Transverse colon (tissue), 4 donors: ENCODE measurements at regions of chr13 and their contacts with region 1.

Region 1: DNA sequence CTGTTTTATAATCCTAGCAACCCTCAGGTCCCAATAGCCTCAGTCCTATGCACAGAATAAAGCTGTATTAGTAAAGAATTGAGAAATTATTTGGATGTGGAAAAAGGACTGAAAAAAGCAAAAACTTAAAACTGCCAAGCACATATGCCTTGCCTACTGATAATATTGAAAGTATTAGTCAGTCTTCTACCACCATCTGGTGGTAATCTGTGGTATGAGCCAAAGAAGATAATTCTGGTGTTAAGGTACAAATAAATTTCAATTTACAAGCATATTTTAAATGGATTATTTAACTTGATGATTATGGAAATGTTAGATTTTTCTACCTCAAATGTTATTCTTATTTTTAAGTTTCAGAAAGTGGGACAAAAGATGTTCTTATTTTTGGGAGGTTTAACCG is 460.3 kb upstream of the KLHL1 start:
- DNase-seq: no peak
- H3K4me3 ChIP-seq: no peak overlapping the region
- H3K27ac ChIP-seq: no peak overlapping the region
- H3K4me1 ChIP-seq: no peaks in the 10 kb centered on the region
- H3K27me3 ChIP-seq: no peaks in the 10 kb centered on the region
- CTCF ChIP-seq: peak; percentile 50 to 71 (median 65)
- EP300 ChIP-seq: no peak
- POLR2A ChIP-seq: no peak

Region 2: DNA sequence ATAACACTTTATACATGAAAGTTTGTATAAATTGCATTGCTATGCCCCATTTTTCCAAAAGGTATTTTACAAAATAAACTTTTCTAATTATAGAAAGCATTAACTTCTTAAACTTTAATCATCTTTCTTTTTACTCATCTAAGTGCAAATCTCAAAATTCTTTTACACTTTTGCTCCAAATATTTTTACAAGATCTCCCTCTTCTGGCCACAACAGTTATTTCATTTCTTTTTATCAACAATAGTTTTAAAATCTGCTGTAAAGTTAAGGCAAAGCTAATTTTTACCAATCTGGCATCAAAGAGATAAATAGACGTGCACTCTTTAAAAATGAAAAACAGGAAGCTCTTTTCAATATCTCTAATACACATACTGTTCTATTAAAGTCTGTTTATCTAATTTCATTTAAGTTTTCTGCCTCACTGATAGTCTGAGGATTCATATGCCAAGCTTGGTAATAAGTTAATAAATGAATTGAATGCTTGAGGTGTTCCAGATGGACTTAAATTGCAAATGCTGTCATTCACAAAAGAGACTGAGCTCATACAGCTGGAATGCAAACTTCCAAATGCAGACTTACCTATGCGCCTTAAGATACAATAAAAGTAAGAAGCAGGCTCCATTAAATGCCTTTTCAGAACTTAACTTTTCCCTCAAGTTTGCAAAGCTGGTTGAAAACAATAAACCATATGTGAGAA is 1044.0 kb before region 1 on chr13:
- in situ Hi-C with region 1: loop called in 3 of 4 experiments (anchors 25 kb)
- intact Hi-C with region 1: no loop called
- DNase-seq: no peak
- H3K4me3 ChIP-seq: no peak overlapping the region
- H3K27ac ChIP-seq: no peak overlapping the region
- H3K4me1 ChIP-seq: no peaks in the 10 kb centered on the region
- H3K27me3 ChIP-seq: no peaks in the 10 kb centered on the region
- CTCF ChIP-seq: peak in 1 of 5 experiments; percentile 5
- EP300 ChIP-seq: no peak
- POLR2A ChIP-seq: no peak

Region 3: GRCh38 chr13:70339738-70340137 is 228.8 kb before region 1 on chr13:
- in situ Hi-C with region 1: loop called in 2 of 4 experiments (anchors 25 kb)
- intact Hi-C with region 1: no loop called
- DNase-seq: no peak
- H3K4me3 ChIP-seq: no peak overlapping the region
- H3K27ac ChIP-seq: no peak overlapping the region
- H3K4me1 ChIP-seq: no peaks in the 10 kb centered on the region
- H3K27me3 ChIP-seq: no peaks in the 10 kb centered on the region
- CTCF ChIP-seq: peak; percentile 32 to 56 (median 47)
- EP300 ChIP-seq: no peak
- POLR2A ChIP-seq: no peak

Region 4: DNA sequence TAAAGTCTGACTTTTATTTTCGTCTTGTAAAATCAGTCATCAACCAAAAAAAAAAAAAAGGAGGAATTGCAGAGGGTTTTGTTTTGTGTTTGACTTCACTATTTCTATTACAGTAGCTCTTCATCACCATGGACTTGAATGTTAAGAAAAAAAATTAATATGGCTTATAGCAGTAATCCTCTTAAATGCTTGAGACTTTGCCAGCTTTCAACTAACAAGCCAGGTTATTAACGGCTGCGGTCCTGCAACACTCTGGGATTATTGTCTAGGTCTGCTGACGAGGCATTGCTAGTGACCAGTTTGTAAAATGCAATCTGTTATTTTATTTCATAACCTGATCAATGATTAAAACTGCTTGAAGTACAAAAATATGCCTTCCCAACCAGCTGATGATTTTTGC is 186.9 kb after region 1 on chr13:
- in situ Hi-C with region 1: no loop called
- intact Hi-C with region 1: no loop called
- DNase-seq: no peak
- H3K4me3 ChIP-seq: no peak overlapping the region
- H3K27ac ChIP-seq: no peak overlapping the region
- H3K4me1 ChIP-seq: no peaks in the 10 kb centered on the region
- H3K27me3 ChIP-seq: no peaks in the 10 kb centered on the region
- CTCF ChIP-seq: no peak
- EP300 ChIP-seq: no peak
- POLR2A ChIP-seq: no peak

Region 5: DNA sequence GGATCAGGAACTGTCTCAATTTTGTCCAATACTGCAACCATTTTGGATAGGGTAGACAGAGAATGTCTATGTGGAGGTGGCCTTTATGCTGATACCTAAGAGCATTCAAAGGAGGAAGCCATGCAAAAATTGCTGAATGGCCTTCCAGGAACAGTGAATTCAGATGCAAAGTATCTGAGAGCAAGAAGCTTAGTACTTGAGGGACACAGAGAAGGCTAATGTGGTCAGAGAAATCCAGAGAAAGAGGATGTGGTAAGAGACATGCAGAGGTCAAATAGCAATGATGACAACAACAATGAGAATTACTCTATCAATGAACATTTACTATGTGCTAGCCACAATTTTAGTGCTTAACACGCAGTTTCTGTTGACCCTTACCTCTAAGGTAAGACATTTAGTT is 325.3 kb after region 1 on chr13:
- in situ Hi-C with region 1: no loop called
- intact Hi-C with region 1: no loop called
- DNase-seq: no peak
- H3K4me3 ChIP-seq: no peak overlapping the region
- H3K27ac ChIP-seq: no peak overlapping the region
- H3K4me1 ChIP-seq: no peaks in the 10 kb centered on the region
- H3K27me3 ChIP-seq: no peaks in the 10 kb centered on the region
- CTCF ChIP-seq: no peak
- EP300 ChIP-seq: no peak
- POLR2A ChIP-seq: no peak